ENCODE measurements at regions of chr10 and their contacts with region 1.

Region 1: GRCh38 chr10:79221110-79222051 is 125.9 kb upstream of the PPIF start:
- DNase-seq: peak; percentile 44
- H3K4me3 ChIP-seq: no peak overlapping the region
- H3K27me3 ChIP-seq: no peaks in the 10 kb centered on the region
- CTCF ChIP-seq: 0 out of 2 replicates have a peak, but pooled peaks have one; percentile 13

Region 2: GRCh38 chr10:79333478-79333877 is 112.1 kb after region 1 on chr10:
- CTCF ChIA-PET with region 1: no interaction called
- POLR2A ChIA-PET with region 1: interaction called, 13 read pairs
- DNase-seq: no peak
- H3K4me3 ChIP-seq: no peak overlapping the region
- H3K27me3 ChIP-seq: no peaks in the 10 kb centered on the region
- CTCF ChIP-seq: no peak